Activated CD4-positive, alpha-beta memory T cell treated with anti-CD3 and anti-CD28 coated beads for 36 hours (primary cell): ENCODE measurements at regions of chr1 and their contacts with region 1.

Region 1: DNA sequence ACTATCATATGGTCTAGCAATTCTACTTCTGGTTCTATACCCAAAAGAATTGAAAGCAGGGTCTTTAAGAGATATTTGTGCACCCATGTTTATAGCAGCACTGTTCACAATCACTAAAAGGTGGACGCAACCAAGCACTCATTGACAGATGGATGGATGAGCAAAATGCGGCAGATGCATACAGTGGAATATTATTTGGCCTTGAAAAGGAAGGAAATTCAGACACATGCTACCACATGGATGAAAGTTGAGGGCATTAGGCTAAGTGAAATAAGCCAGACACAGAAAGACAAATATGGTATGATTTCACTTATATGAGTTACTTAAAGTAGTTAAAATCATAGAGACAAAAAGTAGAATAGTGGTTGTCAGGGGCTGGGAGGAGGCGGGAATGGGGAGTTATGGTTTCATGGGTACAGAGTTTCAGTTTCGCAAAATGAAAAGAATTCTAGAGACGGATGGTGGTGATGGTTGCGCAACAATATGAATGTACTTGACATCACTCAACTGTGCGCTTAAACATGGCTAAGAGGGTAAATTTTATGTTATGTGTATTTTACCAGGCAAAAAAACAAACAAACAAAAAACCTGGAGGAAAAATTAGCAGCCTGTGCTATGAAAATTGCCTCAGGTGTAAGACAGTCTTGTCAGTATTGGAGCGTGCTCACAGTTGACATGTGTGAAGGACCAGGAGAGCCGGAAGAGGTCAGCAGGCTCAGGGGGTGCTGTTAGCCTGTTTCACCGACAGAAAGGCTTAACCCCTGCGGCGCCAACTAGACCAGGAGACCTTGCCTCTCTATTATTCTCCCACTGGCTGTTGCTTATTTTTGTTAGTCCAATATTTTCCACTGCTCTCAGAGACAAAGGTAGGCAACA is 26.5 kb downstream of the CD247 start:
- DNase-seq: peak; percentile 67
- H3K4me3 Mint-ChIP-seq: peak overlapping the region; percentile 61
- H3K27ac Mint-ChIP-seq: peak overlapping the region; percentile 89
- H3K4me1 Mint-ChIP-seq: peaks cover 93% of the 10 kb centered on the region
- H3K27me3 Mint-ChIP-seq: no peaks in the 10 kb centered on the region

Region 2: GRCh38 chr1:167454894-167455785 is 36.7 kb before region 1 on chr1:
- CTCF ChIA-PET with region 1: interaction called, 5 read pairs
- POLR2A ChIA-PET with region 1: interaction called, 5 read pairs
- intact Hi-C with region 1: loop called (anchors 1 kb)
- DNase-seq: peak; percentile 88
- H3K4me3 Mint-ChIP-seq: peak overlapping the region; percentile 78
- H3K27ac Mint-ChIP-seq: peak overlapping the region; percentile 84
- H3K4me1 Mint-ChIP-seq: peaks cover 64% of the 10 kb centered on the region
- H3K27me3 Mint-ChIP-seq: no peaks in the 10 kb centered on the region

Region 3: GRCh38 chr1:167474191-167474716 is 17.6 kb before region 1 on chr1:
- CTCF ChIA-PET with region 1: interaction called, 3 read pairs
- POLR2A ChIA-PET with region 1: interaction called, 3 read pairs
- intact Hi-C with region 1: loop called (anchors 1 kb)
- DNase-seq: peak; percentile 69
- H3K4me3 Mint-ChIP-seq: peak overlapping the region; percentile 27
- H3K27ac Mint-ChIP-seq: peak overlapping the region; percentile 64
- H3K4me1 Mint-ChIP-seq: peaks cover 69% of the 10 kb centered on the region
- H3K27me3 Mint-ChIP-seq: no peaks in the 10 kb centered on the region

Region 4: DNA sequence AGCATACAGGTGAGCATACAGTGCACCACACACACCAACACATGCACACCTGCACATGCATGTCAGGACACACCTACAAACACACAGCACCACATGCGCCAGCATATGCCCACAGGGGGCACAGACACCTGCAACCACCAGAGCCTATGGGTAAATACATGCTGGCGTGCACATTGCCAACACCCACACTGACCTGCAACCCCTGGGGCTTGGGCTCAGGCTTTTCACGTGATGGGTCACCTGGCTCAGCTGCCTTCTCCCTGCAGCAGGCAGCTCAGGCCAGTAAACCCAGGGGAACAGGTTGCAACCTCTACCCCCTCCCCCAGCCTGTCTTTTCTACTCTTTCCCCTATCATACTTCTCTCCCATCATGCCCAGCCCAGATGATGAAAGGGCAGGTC is 18.4 kb after region 1 on chr1:
- CTCF ChIA-PET with region 1: interaction called, 5 read pairs
- POLR2A ChIA-PET with region 1: interaction called, 5 read pairs
- intact Hi-C with region 1: loop called (anchors 1 kb)
- DNase-seq: no peak
- H3K4me3 Mint-ChIP-seq: peak overlapping the region; percentile 8
- H3K27ac Mint-ChIP-seq: peak overlapping the region; percentile 23
- H3K4me1 Mint-ChIP-seq: peaks cover 79% of the 10 kb centered on the region
- H3K27me3 Mint-ChIP-seq: no peaks in the 10 kb centered on the region

Region 5: DNA sequence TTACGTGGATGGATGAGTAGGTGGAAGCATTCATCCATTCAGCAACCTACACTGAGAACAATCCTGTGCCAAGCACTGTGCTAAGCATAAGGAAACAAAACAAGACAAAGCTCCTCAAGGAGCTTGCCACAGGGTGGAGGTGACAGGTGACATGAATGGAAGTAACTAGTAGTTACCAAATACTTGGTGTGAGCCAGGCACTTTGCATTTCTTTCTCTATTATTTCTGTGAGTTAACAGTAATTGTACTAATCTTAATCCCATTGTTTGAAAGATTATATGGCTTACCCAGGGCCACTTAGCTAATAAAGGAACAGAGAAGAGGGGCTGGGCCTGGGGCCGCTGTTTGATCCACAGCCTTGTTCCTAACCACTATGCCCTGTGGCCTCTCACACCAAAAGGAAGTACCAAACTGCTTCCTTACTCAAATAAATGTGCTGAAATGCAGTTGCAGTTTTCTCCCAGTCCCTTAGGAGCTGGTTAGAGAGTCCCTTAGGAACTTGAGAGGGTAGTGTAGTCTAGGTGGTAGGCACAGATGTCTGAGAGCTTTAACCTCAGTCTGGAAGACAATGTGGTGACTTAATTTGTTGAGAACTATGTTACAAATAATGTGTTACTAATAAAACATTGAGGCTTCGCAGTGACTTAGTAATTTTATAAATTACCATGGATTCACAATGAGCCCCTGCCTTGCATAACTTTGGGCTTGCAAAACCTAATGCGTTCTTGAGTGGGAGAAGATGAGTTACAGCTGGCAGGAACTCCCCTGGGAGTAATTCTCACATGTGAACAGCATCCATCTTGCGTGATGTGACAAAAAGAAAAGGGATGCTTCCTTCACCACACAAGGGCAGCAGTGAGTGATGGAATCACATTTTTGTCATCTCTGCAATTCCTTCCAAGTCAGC is 299.7 kb after region 1 on chr1:
- CTCF ChIA-PET with region 1: no interaction called
- POLR2A ChIA-PET with region 1: no interaction called
- intact Hi-C with region 1: no loop called
- DNase-seq: no peak
- H3K4me3 Mint-ChIP-seq: no peak overlapping the region
- H3K27ac Mint-ChIP-seq: no peak overlapping the region
- H3K4me1 Mint-ChIP-seq: peaks cover 9% of the 10 kb centered on the region
- H3K27me3 Mint-ChIP-seq: no peaks in the 10 kb centered on the region